BJ (cell line): ENCODE measurements at regions of chr4 and their contacts with region 1.

Region 1: DNA sequence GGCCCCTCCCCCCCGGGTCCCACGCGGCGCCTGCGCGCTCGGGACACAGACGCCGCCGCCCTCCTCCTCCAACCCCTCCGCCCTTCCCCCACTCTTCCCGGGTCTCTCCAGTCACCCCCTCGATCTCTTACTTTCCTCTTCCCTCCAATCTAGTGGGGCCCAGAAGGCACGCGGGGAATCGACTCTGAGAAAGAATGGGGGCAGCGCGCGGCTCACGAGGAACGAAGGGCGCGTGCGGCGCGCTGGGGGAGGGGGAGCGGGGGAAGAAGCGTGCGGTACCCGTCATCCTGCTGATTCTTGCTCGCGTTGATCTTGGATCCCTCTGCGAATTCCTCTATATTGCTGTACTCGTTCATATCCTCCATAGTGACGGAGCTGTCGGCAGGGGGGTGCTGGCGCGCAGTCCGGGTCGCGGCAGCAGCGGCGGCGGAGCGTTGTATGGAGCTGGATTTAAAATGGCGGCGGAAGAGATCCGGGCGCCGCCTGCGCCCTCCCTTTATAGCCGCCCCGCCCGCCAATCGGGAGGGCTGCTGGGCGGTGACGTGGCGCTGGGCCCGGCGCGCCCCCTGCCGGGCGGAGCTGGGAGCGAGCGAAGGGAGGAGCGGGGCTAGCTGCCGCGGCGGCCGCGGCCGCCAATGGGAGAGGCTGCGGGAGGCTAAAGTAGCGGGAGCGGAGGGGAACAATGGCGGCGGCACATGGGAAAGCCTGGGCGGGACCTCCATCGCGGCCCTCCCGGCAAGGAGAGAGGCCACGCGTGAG is 1.1 kb downstream of the HNRNPDL start:
- DNase-seq: peak; percentile 52
- H3K4me3 ChIP-seq: peak overlapping the region; percentile 99
- H3K27me3 ChIP-seq: no peaks in the 10 kb centered on the region
- CTCF ChIP-seq: peak; percentile 43

Region 2: DNA sequence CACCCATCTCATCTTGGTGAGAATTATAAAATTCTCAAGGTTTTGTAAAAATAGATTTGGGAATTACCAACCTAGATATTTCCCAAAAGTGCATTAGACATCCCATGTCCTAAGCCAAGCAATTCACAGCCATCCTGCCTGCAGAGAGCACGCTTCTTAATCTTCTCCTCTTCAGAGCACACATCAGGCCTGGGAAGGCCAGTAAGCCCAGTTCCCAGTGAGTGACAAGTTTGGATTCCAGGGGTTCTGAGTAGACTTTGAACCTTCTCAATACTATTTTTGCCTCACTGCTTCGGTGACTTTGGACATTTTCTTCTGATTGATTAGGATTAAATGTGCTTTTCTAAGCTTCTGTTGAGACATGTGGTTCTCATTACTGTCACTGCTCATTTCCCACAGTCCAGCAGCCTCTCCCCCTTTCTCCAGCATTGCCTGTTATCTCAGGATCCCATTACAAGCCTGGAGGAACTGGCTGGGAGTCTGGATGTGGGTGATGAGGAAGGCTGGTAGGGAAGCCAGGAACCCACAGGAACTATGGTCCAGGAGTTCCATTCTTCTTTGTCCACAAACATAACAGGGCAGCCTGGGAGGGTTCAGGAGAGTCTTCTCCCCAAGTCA is 189.1 kb after region 1 on chr4:
- CTCF ChIA-PET with region 1: no interaction called
- POLR2A ChIA-PET with region 1: no interaction called
- DNase-seq: peak; percentile 18
- H3K4me3 ChIP-seq: no peak overlapping the region
- H3K27me3 ChIP-seq: peaks cover 4% of the 10 kb centered on the region
- CTCF ChIP-seq: no peak

Region 3: DNA sequence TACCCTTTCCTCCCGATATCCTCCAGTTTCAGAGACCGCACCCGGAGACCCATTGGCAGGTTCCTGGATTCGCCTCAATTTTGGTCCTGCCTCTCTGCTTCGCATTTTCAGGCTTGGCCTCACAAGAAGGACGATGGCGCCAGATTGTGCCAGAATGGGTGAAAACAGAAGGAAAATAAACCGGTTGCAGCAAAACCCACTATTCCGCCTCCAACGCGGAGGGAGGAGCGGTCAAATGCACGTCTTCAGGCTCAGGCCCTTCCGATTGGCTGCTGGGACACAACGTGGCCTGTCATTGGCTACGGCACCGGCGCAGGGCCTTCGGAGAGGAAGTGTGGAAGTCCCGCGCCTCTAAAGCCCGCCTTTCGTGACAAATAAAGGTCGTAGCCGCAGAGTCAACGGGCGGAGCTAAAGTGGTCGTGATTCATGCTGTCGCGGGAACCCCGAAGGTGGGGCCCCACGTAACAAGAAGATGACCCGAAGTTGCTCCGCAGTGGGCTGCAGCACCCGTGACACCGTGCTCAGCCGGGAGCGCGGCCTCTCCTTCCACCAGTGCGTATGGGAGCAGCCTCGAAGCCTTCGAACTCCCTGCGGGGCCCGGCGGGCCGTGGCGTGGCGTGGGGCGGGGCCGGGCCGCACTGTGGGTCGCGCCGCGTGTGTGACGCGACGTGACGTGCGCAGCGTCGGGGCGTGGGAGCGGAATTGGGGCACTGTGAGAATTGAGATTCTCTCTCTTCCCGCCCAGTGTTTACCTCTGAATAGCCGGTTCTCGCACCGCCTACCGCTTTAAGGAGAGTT is 471.4 kb after region 1 on chr4 and contains the start of gene THAP9:
- CTCF ChIA-PET with region 1: no interaction called
- POLR2A ChIA-PET with region 1: interaction called, 13 read pairs
- DNase-seq: peak; percentile 97
- H3K4me3 ChIP-seq: peak within 1 kb of the TSS; percentile 68
- H3K27me3 ChIP-seq: no peaks in the 10 kb centered on the region
- CTCF ChIP-seq: no peak
- polyA plus RNA-seq, gene THAP9: 1.8 and 2.8 TPM in 2 replicates